Activated CD4-positive, alpha-beta T cell treated with anti-CD3 and anti-CD28 coated beads, Interleukin-2, amount 10 ng/mL, durations not matched to agents 24 days and 14 days (primary cell): ENCODE measurements at regions of chr1 and their contacts with region 1.

Region 1: GRCh38 chr1:236523701-236524141 is at the start of gene LGALS8:
- DNase-seq: peak; percentile 95
- H3K4me3 Mint-ChIP-seq: peak within 1 kb of the TSS; percentile 93
- H3K27ac Mint-ChIP-seq: peak within 1 kb of the TSS; percentile 98
- H3K4me1 Mint-ChIP-seq: peaks cover 19% of the 10 kb centered on the region
- H3K27me3 Mint-ChIP-seq: no peaks in the 10 kb centered on the region
- total RNA-seq, gene LGALS8: 68.9 and 71.9 TPM in 2 replicates

Region 2: GRCh38 chr1:236142253-236143103 is 381.2 kb before region 1 on chr1 and contains the start of gene GPR137B:
- intact Hi-C with region 1: loop called (anchors 5 kb)
- DNase-seq: peak; percentile 88
- H3K4me3 Mint-ChIP-seq: peak within 1 kb of the TSS; percentile 92
- H3K27ac Mint-ChIP-seq: peak within 1 kb of the TSS; percentile 82
- H3K4me1 Mint-ChIP-seq: peaks cover 28% of the 10 kb centered on the region
- H3K27me3 Mint-ChIP-seq: peaks cover 37% of the 10 kb centered on the region
- total RNA-seq, gene GPR137B: 6.6 and 7.7 TPM in 2 replicates

Region 3: DNA sequence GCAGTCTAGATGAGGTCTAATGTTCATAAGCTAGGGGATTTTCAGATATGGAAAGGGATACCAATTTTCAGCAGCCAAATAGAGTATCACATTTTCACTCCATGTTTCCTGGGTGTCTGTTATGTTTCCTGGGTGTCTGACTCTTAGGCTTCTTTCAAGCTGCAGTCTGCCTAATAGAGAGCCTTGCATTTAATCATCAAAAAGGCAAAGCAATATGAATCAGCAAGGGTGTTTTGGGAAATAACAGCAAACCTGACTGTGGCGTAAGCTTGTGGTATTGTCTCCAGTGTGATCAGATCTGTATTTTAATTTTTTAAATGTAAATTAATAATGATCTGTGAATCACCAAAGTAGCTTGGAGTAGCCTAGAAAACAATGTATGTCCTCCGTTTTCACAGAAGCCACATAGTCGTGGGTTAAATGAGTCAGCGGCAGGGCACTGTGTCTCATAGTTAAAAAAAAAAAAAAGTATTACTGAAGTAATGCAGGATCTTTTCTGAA is 10.5 kb after region 1 on chr1:
- intact Hi-C with region 1: loop called (anchors 1 kb)
- DNase-seq: peak; percentile 68
- H3K4me3 Mint-ChIP-seq: peak overlapping the region; percentile 50
- H3K27ac Mint-ChIP-seq: peak overlapping the region; percentile 90
- H3K4me1 Mint-ChIP-seq: peaks cover 35% of the 10 kb centered on the region
- H3K27me3 Mint-ChIP-seq: no peaks in the 10 kb centered on the region

Region 4: GRCh38 chr1:236795035-236795756 is 271.5 kb after region 1 on chr1 and contains the start of gene MTR:
- intact Hi-C with region 1: loop called (anchors 5 kb)
- DNase-seq: peak; percentile 99
- H3K4me3 Mint-ChIP-seq: peak within 1 kb of the TSS; percentile 92
- H3K27ac Mint-ChIP-seq: peak within 1 kb of the TSS; percentile 94
- H3K4me1 Mint-ChIP-seq: peaks cover 28% of the 10 kb centered on the region
- H3K27me3 Mint-ChIP-seq: peaks cover 9% of the 10 kb centered on the region
- total RNA-seq, gene MTR: 50.7 and 51.8 TPM in 2 replicates